ENCODE measurements at regions of chr19 and their contacts with region 1.

Region 1: DNA sequence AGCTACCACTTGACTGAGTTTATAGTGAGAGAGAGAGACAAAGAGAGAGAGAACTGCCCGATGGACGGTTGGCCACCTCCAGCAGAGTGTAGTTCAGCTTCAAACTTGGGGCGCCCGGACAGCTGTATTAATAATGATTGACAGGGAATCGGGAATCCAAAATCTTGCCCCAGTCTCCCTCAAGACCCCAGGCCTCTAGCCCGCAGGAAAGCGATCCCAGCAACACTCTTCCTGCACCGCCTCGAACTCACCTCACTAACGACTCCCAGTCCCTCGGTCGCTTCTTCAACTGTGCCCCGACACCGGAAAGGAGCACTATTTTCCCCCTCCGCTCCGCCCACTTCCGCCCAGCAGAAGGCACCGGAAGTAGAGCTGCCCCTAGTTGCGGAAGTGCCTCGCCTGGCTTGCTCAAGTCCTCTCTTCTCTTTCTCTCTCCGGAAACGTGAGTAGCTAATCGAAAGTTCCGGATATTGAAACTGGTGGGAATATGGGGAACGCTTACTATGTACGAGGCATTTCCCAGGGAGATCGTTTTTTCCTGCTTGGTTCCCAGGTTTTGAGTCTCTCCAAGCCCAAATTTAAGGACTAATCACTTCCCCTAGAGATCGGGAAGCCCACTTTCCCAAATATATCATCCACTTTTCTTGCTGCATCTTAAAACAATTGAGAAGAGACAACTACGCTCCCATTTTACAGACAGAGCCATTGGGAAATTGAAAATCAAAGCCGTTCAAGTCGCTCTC is at the start of gene NOSIP:
- DNase-seq: peak; percentile 93
- ATAC-seq: peak; percentile 91
- H3K4me3 Mint-ChIP-seq: peak within 1 kb of the TSS; percentile 88
- H3K27ac Mint-ChIP-seq: peak within 1 kb of the TSS; percentile 89
- H3K4me1 Mint-ChIP-seq: peaks cover 25% of the 10 kb centered on the region
- H3K27me3 Mint-ChIP-seq: no peaks in the 10 kb centered on the region
- total RNA-seq, gene NOSIP: 122 to 125 TPM

Region 2: GRCh38 chr19:49497047-49497788 is 83.2 kb before region 1 on chr19:
- POLR2A ChIA-PET with region 1: interaction called, 12 read pairs
- DNase-seq: peak; percentile 68
- ATAC-seq: no peak
- H3K4me3 Mint-ChIP-seq: peak overlapping the region; percentile 95
- H3K27ac Mint-ChIP-seq: peak overlapping the region; percentile 92
- H3K4me1 Mint-ChIP-seq: peaks cover 42% of the 10 kb centered on the region
- H3K27me3 Mint-ChIP-seq: no peaks in the 10 kb centered on the region

Region 3: DNA sequence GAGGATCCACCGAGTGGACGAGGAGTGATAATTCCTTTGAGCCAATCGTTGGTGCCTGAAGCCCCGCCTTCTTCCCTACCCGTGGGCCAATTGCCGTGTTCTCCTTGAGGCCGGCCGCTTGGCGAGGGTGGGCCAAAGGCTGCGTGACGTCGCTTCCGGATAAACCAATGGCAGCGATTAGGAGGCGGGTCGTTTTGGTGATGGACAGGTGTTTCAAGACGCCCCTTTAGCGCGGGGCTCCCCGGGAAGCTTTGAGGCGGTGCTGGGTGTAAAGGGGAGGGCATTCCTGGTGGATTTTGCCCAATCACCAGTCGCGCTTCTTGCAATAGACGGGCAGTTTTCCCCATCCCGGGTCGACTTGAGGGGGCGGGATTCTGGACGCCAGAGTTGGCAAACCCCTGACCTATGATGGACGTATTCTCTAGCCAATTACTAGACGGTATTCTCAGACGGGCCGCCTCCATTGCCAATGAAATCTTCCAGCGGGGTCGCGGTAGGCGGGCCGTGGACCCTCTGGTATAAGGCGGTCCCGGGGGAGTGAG is 96.3 kb after region 1 on chr19:
- POLR2A ChIA-PET with region 1: interaction called, 17 read pairs
- DNase-seq: peak; percentile 94
- ATAC-seq: peak; percentile 77
- H3K4me3 Mint-ChIP-seq: peak overlapping the region; percentile 99
- H3K27ac Mint-ChIP-seq: peak overlapping the region; percentile 97
- H3K4me1 Mint-ChIP-seq: peaks cover 25% of the 10 kb centered on the region
- H3K27me3 Mint-ChIP-seq: no peaks in the 10 kb centered on the region